ENCODE measurements at regions of chr18 and their contacts with region 1.

Region 1: GRCh38 chr18:2655178-2655953 is at the start of gene SMCHD1:
- DNase-seq: peak; percentile 83 to 95 (median 89)
- ATAC-seq: peak; percentile 69 to 71
- H3K4me3 Mint-ChIP-seq: peak within 1 kb of the TSS; percentile 92 to 99 (median 96)
- H3K27ac Mint-ChIP-seq: peak within 1 kb of the TSS; percentile 90 to 99 (median 98)
- H3K4me1 Mint-ChIP-seq: peaks cover 8 to 62% (median 42%) of the 10 kb centered on the region in 4 donors
- H3K27me3 Mint-ChIP-seq: no peaks in the 10 kb centered on the region
- polyA plus RNA-seq, gene SMCHD1: 27.7 to 33.7 (median 29.4) TPM

Region 2: DNA sequence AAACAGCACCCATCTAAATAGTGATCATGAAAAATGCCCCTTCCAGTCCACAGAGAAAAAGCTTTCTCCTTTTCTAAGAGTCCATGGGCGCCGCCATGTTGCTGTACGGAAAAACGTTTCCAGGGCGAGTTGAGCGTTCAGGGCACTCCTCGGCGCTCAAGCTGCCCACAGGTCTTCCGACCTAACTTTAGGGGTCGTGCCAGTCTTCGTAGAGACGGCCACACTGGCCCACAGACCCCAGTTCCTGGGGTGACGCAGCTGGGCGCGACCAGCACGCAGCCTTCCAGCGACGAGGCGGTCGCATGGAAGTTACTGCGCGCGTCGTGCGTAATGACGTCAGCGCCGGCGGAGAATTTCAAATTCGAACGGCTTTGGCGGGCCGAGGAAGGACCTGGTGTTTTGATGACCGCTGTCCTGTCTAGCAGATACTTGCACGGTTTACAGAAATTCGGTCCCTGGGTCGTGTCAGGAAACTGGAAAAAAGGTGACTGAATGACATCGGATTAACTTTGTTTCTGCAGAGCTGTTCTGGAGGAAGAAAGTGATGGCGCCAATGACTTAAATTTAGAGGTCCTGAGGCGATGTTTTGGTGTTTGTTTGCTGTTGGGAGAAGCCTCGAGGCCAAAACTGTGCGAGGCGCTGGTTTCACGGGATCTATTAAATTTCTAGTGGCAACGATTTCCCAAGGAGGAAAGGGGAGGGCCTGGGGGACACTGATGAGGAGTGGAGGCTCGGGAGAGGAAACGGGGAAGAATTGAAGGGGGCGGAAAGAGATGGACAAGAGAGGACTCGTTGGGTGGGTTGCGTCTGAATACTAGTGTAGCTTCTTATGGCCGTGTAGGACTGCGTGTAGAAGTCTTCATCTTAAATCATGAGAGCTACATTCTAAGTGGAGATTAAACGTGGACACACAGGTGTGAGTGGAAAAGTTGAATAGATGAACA is 83.9 kb before region 1 on chr18 and contains the starts of genes METTL4 and NDC80:
- POLR2A ChIA-PET with region 1: interaction called, 87 read pairs
- DNase-seq: peak; percentile 75 to 95 (median 82)
- ATAC-seq: peak; percentile 86 to 89
- H3K4me3 Mint-ChIP-seq: peak within 1 kb of the TSS; percentile 93 to 100 (median 98)
- H3K27ac Mint-ChIP-seq: peak within 1 kb of the TSS; percentile 95 to 100 (median 99)
- H3K4me1 Mint-ChIP-seq: peaks cover 29 to 68% (median 56%) of the 10 kb centered on the region in 4 donors
- H3K27me3 Mint-ChIP-seq: no peaks in the 10 kb centered on the region
- polyA plus RNA-seq, gene METTL4: 14.7 to 17.5 (median 16.9) TPM
- polyA plus RNA-seq, gene NDC80: 1.7 to 2.9 (median 1.9) TPM

Region 3: DNA sequence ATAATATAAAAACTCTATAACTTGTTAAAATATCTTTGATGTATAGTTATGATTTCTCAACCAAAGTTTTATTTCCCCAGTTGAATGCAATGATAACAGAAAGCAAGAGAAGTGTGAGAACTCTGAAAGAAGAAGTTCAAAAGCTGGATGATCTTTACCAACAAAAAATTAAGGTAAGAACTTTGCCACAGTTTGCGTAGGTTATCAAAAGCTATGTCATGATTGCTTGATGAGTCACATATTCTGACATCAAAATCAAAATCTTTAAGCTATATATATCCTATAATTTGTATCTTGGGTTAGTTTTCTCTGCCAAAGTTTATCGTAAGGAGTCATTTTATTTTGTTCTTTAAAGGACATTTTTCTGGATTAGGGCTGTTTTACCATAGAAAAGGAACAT is 49.0 kb before region 1 on chr18:
- POLR2A ChIA-PET with region 1: interaction called, 62 read pairs
- DNase-seq: peak in 4 of 10 donors; percentile 19 to 53 (median 36)
- ATAC-seq: peak; percentile 51 to 75
- H3K4me3 Mint-ChIP-seq: peak overlapping the region; percentile 8 to 80 (median 68)
- H3K27ac Mint-ChIP-seq: peak overlapping the region in 9 of 10 donors; percentile 75 to 94 (median 89)
- H3K4me1 Mint-ChIP-seq: peaks cover 15 to 55% (median 42%) of the 10 kb centered on the region in 4 donors
- H3K27me3 Mint-ChIP-seq: no peaks in the 10 kb centered on the region

Region 4: DNA sequence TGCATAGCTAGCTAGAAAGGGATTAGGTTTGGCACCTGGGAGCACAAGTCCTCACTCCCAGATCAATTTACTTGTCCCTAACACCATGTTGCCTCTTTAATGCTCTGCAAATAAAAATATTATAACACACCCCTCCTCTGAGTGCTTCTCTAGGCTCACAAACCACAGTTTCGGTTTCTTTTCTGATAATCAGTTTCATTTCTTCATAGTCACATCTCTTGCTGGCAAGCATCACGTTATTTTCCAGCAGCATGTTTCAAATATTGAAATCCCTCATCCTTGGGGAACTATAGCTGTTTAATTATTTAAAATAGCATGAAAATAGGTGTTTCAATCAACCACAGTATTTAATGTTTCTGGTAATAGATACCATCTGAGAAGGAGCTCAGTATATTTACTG is 13.7 kb before region 1 on chr18:
- POLR2A ChIA-PET with region 1: interaction called, 511 read pairs
- DNase-seq: peak in 3 of 10 donors; percentile 52
- ATAC-seq: peak in 1 of 2 donors; percentile 23
- H3K4me3 Mint-ChIP-seq: peak overlapping the region; percentile 65 to 94 (median 82)
- H3K27ac Mint-ChIP-seq: peak overlapping the region in 5 of 10 donors; percentile 87 to 99 (median 97)
- H3K4me1 Mint-ChIP-seq: peaks cover 23 to 59% (median 48%) of the 10 kb centered on the region in 4 donors
- H3K27me3 Mint-ChIP-seq: no peaks in the 10 kb centered on the region

Region 5: GRCh38 chr18:2687390-2688001 is 32.1 kb after region 1 on chr18:
- POLR2A ChIA-PET with region 1: interaction called, 12 read pairs
- DNase-seq: no peak
- ATAC-seq: peak; percentile 21 to 23
- H3K4me3 Mint-ChIP-seq: peak overlapping the region in 9 of 10 donors; percentile 13 to 67 (median 47)
- H3K27ac Mint-ChIP-seq: peak overlapping the region in 9 of 10 donors; percentile 23 to 80 (median 53)
- H3K4me1 Mint-ChIP-seq: peaks cover 22 to 74% (median 54%) of the 10 kb centered on the region in 4 donors
- H3K27me3 Mint-ChIP-seq: no peaks in the 10 kb centered on the region

Measured in naive thymus-derived CD8-positive, alpha-beta T cell (primary cell).